GM10248 (cell line): ENCODE measurements at regions of chr15 and their contacts with region 1.

Region 1: DNA sequence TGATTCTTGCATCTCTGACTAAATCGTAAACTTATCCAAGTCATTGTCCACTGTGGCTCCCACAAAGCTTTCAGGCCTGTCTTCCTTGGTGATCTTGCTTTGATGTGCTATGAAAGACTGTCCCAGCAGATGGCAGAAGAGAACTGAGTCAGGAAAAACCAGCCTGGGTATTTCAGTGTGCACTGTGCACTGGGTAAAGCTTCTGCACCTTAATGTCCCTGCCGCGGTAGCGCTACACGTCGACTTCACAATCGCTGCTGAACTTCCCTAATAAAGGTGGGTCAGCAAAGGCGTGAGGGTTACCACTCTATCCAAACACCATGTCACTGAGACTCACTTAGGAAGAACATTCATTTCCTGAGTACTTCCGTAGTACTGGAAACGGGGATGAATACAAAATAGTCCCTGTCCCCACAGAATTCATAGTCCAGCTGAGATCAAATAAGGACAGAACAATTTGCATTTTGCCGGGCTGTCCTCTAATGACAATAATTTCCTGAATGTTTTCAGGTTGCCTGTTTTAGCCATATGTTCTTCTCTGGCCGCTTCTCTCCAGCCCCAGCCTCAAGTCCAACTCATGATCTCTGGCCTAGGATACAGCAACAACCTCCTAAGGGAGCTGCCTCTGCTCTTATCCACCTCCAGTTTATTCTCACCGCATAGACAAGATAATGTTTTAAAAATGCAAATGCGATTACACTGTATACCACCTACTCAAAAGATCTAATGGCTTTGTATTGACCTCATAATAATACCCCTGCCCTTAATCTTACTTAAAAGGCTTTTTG is 83.6 kb upstream of the AKAP13 start:
- DNase-seq: peak; percentile 77
- CTCF ChIP-seq: peak; percentile 78

Region 2: GRCh38 chr15:85312486-85312885 is 15.7 kb after region 1 on chr15:
- CTCF ChIA-PET with region 1: interaction called, 28 read pairs
- POLR2A ChIA-PET with region 1: no interaction called
- DNase-seq: peak; percentile 82
- CTCF ChIP-seq: no peak

Region 3: GRCh38 chr15:85330901-85331588 is 34.2 kb after region 1 on chr15:
- CTCF ChIA-PET with region 1: interaction called, 22 read pairs
- POLR2A ChIA-PET with region 1: interaction called, 3 read pairs
- DNase-seq: peak; percentile 77
- CTCF ChIP-seq: peak; percentile 94

Region 4: DNA sequence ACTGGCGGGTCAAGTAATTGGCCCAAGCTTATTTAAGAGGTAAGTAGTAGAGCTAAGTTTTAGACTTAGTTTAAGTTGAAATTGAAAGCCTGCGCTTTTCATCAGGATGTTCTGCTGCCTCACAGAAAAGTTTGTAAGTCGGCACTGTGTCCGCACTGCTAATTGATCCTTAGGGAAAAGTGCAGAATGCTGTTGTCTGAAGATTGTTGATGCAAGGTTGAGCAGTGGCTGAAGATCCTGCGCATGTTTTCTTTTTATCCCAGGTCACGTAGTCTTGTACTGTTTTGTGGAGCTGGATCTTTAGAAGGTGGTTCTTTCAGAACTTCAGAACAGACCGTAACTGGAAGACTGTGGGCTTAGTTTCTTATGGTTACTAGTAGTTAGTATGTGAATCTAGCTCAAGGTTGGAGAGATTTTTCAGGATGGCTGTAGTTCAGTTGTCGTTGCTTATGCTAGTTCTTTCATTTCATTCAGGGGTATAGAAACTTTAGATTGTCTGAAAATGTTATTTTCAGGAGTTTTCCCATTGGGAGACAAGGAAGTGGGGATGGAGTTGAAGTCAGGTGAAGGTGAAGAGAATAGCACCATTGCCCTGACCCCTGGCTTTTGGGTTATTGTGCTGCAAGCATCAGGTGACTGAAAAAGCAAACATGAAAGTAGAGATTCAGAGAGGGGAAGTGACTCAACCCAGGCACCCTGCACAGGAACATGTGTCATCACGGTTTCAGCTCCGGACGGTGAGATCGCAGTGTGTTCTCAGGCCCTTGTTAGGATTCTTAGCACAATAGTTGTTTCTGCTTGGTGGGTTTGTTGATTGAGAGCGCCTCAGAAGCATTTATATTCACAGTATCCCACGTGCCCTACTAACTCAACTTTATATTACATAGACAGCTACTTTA is 116.4 kb after region 1 on chr15:
- CTCF ChIA-PET with region 1: interaction called, 70 read pairs
- POLR2A ChIA-PET with region 1: no interaction called
- DNase-seq: peak; percentile 86
- CTCF ChIP-seq: peak; percentile 10

Region 5: GRCh38 chr15:85504749-85505676 is 208.2 kb after region 1 on chr15:
- CTCF ChIA-PET with region 1: interaction called, 13 read pairs
- POLR2A ChIA-PET with region 1: no interaction called
- DNase-seq: peak; percentile 32
- CTCF ChIP-seq: peak; percentile 67